A673 (cell line): ENCODE measurements at regions of chr12 and their contacts with region 1.

Region 1: DNA sequence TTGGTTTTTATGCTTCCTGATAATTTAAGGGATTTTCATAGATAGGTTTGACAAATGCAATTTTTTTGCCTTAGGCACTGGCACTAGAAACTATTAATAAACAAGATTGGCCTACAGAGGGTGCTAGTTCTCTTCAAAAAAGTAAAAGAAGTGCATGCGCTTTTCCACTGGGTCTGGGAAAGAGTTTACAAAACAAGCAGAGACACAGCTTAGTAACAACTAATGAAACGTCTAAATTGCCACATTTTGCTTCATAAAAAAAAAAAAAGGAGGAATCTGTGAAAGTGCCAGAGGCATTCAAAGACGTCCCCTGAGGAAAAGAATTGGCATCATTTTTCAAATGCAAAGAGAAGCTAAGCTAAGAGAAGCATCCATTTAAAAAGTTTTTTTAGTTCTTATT is 58.3 kb upstream of the EEA1 start:
- DNase-seq: peak; percentile 90
- H3K4me3 ChIP-seq: no peak overlapping the region
- H3K27ac ChIP-seq: peak overlapping the region; percentile 35
- H3K4me1 ChIP-seq: peaks cover 7% of the 10 kb centered on the region
- H3K27me3 ChIP-seq: no peaks in the 10 kb centered on the region
- CTCF ChIP-seq: peak; percentile 69

Region 2: DNA sequence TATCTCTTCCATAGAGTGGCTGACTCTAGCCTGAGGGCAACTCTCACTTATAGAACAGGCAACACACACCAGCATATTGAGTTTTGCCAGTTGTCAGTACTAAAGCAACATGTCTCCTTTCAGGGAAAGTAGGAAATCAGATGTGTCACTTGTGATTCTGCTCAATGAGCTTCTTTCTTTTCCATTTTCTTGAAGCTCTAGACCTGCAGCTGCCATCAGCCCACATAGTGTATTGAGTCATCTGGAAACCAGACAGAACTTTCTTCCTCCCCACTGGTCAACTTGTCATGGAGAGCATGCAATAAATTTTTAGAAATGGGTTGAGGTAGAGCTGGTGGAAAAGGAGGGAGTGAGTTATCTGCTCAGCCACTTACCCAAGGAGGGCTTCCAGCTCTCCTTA is 493.5 kb before region 1 on chr12:
- CTCF ChIA-PET with region 1: no interaction called
- POLR2A ChIA-PET with region 1: no interaction called
- intact Hi-C with region 1: no loop called
- DNase-seq: no peak
- H3K4me3 ChIP-seq: no peak overlapping the region
- H3K27ac ChIP-seq: no peak overlapping the region
- H3K4me1 ChIP-seq: no peaks in the 10 kb centered on the region
- H3K27me3 ChIP-seq: no peaks in the 10 kb centered on the region
- CTCF ChIP-seq: no peak

Region 3: GRCh38 chr12:92829686-92830282 is 157.6 kb before region 1 on chr12:
- CTCF ChIA-PET with region 1: interaction called, 13 read pairs
- POLR2A ChIA-PET with region 1: no interaction called
- intact Hi-C with region 1: no loop called
- DNase-seq: no peak
- H3K4me3 ChIP-seq: no peak overlapping the region
- H3K27ac ChIP-seq: peak overlapping the region; percentile 23
- H3K4me1 ChIP-seq: no peaks in the 10 kb centered on the region
- H3K27me3 ChIP-seq: no peaks in the 10 kb centered on the region
- CTCF ChIP-seq: no peak

Region 4: DNA sequence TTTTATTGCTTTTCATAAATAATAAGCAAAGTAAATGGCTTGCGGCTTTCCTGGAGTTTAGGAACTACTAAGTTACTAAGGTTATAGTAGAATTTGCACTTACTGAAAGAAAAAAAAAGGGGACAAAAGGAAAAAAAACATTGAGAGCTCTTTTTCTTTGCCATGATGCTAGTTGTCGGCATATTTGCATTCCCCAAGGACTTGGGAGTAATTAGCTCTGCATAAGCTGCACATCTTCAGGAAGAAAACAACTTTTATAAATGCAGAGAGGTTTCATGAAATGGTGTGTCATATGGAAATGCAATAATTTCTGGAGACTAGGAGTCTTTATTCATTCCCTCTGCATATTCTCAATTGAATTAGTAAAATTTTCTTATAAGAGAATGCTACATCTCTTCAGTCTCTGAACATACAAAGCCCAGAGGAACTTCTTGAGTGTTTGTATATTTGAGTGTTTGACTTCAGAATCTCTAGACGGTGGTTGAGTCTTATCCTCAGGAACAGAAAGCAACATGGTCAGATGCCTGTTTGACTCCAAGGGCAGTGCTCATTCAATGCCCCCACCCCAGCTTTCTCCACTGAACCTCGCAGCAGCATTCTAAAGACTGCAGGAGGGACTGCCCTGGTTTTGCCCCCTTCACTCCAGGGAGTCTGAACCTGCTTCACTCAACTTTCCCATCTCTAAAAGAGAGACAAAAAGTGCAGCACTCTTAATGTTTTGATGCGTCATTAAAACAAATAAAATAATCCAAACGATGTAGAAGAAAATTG is 100.7 kb after region 1 on chr12:
- CTCF ChIA-PET with region 1: no interaction called
- POLR2A ChIA-PET with region 1: no interaction called
- intact Hi-C with region 1: no loop called
- DNase-seq: peak; percentile 77
- H3K4me3 ChIP-seq: no peak overlapping the region
- H3K27ac ChIP-seq: peak overlapping the region; percentile 27
- H3K4me1 ChIP-seq: peaks cover 20% of the 10 kb centered on the region
- H3K27me3 ChIP-seq: no peaks in the 10 kb centered on the region
- CTCF ChIP-seq: no peak

Region 5: GRCh38 chr12:93200291-93200917 is 213.0 kb after region 1 on chr12:
- CTCF ChIA-PET with region 1: no interaction called
- POLR2A ChIA-PET with region 1: no interaction called
- intact Hi-C with region 1: loop called (anchors 1 kb)
- DNase-seq: no peak
- H3K4me3 ChIP-seq: no peak overlapping the region
- H3K27ac ChIP-seq: no peak overlapping the region
- H3K4me1 ChIP-seq: peaks cover 40% of the 10 kb centered on the region
- H3K27me3 ChIP-seq: no peaks in the 10 kb centered on the region
- CTCF ChIP-seq: no peak

Region 6: DNA sequence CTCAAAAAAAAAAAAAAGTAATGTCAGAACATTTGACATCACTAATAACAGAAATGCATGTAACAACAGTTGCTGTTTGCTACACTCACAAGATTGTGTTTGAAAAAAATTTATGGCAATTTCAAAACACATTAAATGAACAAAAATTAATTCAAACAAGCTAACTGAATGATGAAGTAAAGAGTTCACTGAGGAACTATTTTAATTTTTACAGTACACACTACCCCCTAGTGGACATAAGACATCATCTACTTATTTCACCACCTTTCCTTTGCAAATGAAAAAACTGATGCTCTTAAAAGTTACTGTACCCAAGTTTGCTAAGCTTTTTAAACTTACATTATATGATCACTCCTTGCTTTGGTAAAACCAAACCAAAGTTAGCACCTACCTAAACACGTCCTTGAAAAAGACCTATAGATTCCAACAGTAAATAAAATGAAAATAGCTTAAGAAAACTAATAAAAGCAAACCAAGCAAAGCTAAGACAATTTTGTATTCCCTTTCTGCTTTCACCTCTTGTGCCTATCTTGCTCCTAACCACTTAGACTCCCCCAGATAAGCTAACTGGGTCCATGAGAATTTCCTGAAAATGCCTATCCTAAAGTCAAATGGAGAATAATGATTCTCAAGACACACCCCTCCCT is 432.1 kb after region 1 on chr12:
- CTCF ChIA-PET with region 1: interaction called, 13 read pairs
- POLR2A ChIA-PET with region 1: no interaction called
- intact Hi-C with region 1: no loop called
- DNase-seq: peak; percentile 78
- H3K4me3 ChIP-seq: no peak overlapping the region
- H3K27ac ChIP-seq: no peak overlapping the region
- H3K4me1 ChIP-seq: peaks cover 73% of the 10 kb centered on the region
- H3K27me3 ChIP-seq: no peaks in the 10 kb centered on the region
- CTCF ChIP-seq: peak; percentile 66